Activated CD4-positive, alpha-beta memory T cell treated with anti-CD3 and anti-CD28 coated beads for 36 hours (primary cell): ENCODE measurements at regions of chr12 and their contacts with region 1.

Region 1: DNA sequence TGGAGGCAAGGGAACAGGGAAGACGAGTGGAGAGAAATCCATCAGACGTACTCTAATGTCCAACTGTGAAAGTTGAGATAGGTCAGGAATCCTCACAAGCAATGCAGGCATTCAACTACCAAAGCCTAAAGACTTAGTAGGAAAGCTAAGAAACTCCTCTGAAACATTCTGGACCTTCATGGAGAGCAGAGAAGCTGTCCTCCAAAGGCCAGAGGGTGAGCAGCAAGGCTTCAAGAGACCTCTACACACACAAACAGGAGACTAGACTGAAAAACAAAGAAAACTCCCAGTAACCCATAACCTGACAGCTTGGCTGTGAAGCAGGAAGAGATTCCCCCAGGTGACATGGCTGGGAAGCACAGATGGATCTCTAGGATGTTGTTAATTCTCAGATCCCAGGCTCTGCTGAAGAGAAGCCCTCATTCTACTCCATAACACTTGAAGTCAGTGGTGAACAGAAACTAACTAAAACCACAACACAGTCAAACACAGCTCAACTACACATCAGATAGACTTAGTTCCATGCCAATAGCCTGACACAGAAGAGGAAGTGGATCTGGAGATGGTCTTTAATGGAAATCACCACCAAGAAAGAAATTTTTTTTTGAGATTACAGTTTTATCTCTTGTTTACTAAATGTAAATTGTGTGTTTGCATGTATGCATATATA is 23.2 kb upstream of the LYZ start:
- DNase-seq: no peak
- H3K4me3 Mint-ChIP-seq: no peak overlapping the region
- H3K27ac Mint-ChIP-seq: no peak overlapping the region
- H3K4me1 Mint-ChIP-seq: peaks cover 22% of the 10 kb centered on the region
- H3K27me3 Mint-ChIP-seq: no peaks in the 10 kb centered on the region

Region 2: DNA sequence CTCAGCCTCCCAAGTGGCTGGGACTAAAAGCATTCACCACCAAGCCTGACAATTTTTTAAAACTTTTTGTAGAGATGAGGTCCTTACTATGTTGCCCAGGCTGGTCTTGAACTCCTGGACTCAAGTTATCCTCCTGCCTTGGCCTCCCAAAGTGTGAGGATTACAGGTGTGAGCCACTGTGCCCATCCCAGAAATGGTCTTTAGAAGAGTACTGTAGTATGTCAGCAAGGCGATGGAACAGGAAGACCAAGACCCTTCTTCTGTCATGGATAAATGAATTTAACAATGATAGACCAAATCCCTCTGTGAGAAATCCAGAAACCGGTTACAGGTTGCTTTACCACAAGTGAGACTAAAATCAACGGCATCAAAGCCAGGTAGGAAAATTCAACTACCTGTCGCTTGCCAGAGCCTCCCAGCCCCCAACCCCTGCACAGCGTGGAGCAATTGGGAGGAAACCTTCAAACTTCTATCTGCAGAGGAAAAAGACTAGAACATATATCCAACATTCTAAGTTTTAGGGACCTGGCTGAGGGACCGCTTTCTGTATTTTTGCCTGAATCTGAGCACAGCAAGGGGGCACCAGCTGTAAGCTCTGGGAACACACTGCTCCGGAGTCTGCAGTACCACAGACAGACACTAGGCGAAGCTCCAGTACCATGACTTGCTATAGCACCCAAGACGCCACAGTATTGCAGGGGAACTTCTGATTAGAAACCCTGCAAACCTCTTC is 34.2 kb before region 1 on chr12:
- CTCF ChIA-PET with region 1: interaction called, 5 read pairs
- POLR2A ChIA-PET with region 1: no interaction called
- intact Hi-C with region 1: loop called (anchors 5 kb)
- DNase-seq: peak; percentile 87
- H3K4me3 Mint-ChIP-seq: no peak overlapping the region
- H3K27ac Mint-ChIP-seq: no peak overlapping the region
- H3K4me1 Mint-ChIP-seq: peaks cover 7% of the 10 kb centered on the region
- H3K27me3 Mint-ChIP-seq: peaks cover 15% of the 10 kb centered on the region

Region 3: DNA sequence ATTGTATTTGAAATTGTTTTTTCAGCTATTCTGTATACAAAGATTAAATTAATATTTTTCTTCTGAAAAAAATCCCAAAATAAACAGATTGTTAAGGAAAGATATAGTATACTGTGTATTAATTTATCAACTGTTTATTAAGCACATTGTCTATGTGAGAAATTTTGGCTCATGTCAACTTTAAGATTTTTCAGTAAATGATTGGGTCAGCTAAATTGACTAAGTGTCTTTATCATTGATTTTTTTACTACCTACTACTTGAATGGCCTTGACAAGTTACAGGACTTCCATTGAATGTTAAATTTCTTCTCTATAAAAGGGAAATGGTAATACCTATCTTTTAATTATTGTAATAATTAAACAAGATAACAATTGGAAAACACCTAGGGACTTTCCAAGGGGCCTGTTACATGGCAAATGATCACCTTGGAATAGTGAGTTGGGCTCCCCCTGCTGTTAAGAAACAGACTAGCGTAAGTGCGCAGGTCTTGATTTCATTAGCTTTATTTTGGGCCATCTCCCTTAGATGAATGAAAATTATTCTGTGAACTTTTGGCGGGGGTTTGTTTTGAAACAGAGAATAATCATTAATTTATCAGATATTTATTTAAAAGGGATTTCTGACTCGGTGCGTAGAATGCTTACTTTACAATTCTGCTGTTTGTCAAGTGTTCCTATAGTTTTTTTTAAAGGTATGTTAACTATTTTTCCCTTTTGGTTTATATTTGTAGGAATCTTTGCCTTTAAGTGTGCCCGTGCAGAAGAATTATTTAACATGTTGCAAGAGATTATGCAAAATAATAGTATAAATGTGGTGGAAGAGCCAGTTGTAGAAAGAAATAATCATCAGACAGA is 245.8 kb after region 1 on chr12:
- CTCF ChIA-PET with region 1: no interaction called
- POLR2A ChIA-PET with region 1: no interaction called
- intact Hi-C with region 1: no loop called
- DNase-seq: peak; percentile 54
- H3K4me3 Mint-ChIP-seq: no peak overlapping the region
- H3K27ac Mint-ChIP-seq: no peak overlapping the region
- H3K4me1 Mint-ChIP-seq: peaks cover 9% of the 10 kb centered on the region
- H3K27me3 Mint-ChIP-seq: no peaks in the 10 kb centered on the region